ENCODE measurements at regions of chr15 and their contacts with region 1.

Region 1: DNA sequence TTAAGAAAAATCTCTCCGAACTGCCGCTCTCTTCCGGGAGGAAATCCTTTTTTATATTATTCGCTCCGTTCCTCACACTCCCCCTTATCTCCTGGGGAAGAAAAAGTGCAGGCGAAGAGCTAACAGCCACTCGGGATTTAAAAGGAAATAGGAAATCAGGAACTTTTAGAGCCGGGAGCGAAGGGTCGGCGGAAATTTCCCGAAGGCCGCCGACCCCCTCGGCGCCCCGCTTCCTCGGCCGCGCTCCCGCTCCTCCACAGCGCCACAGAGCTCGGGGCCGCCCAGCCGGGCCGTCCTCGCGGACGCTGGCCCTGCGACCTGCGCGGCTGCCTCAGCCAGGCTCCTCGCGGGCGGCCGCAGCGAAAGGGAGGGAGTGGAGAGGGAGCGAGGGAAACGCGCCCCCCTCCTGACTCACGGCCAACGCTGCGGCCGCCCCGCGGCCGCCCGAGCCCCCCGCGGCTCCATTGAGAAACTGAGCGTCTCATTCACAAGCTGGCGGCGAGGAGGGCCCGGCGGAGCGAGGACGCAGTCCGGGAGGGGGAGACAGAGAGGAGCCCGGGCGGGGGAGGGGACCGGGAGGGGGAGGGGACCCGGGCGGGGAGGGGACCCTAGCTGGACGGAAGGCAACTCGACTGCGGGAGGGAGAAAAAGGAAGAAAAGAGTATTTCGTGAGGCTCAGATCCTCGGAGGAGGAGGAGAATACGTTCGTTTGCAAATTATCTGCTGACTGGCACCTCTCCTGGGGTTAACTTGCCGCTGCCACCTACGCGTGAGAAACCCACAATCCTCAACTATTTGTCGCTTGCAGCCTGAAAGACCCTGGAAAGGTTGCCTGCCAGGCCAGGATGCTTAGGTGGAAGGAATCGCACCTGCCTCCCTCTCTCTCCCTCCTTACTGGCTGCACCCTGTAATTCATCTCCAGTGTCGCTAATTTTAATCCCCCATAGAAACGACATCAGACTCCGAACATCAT is at the start of gene PTPN9:
- DNase-seq: peak; percentile 90
- ATAC-seq: peak; percentile 90
- total RNA-seq, gene PTPN9: 9.3 TPM

Region 2: GRCh38 chr15:75517233-75517632 is 62.0 kb before region 1 on chr15:
- intact Hi-C with region 1: loop called (anchors 10 kb)
- DNase-seq: no peak
- ATAC-seq: no peak

Region 3: DNA sequence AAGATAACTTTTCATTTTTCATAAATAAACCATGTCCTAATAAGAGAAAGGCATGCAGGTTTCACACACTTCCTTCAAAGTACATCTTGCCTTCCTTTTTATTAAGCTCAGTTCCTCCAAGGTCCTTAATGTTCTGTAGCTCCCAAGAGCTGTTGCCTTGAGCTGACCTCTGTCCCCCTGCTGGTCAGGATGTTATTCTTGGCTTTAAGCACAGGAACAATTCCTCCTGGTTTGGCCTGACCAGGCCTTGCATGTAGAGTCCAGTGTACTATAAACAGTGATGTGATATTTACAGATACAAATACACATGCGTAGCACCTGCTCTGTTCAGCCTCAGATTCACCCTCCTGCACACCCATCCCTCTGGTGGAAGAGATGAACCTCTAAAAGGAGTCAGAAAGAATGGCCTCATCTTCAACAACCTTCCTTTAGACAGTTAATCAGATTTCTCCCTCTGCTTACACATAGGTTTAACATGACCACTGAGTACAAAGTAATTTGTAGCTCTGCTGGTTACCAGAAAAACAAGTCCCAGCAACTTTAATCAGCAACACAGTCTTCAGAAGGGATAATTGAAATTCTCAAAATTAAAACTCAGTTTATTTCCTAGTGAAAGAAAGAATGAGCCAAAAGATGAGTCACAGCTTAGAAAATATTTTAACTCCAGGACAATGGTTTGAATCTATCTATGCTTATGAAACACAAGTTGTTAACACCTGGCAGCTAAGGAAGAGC is 46.7 kb before region 1 on chr15:
- intact Hi-C with region 1: loop called (anchors 2 kb)
- DNase-seq: no peak
- ATAC-seq: peak; percentile 96

Region 4: DNA sequence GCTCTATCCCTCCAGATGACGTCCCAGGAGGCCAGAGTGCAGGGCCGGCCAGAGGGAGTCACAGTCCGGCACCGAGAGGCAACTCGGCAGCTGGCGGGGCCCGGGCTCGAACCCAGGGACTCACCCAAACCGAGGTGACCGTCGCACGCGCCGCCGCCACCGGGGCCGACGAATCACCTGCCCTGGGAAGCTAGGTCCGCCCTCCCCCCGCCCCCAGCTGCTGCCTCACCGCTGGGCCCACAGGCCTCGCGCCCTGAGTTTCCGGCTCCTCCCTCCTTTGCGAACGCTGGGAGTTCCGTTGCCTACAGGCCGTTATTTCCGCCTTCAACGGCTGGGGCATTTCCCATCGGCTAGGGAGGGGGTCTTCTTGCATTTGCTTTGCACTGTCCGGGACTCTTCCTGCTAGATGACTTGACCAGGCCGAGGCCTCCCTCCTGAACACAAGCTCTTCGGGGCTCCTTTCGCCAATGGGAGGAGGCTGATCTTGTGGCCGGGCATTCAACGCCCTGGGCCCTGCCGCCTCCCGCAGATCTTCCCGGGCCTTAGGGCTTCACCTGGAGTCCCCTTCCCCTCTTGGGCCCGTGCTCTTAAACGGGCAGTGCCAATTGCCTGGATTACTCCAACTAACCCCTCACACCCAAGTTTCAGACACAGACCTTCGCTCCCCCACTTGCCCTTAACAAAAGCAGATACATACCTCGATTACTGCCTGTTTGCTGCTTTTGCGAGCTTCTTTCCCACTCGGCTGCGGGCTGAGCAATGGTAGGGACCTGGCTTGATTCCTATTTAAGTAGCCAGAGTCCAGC is 46.5 kb after region 1 on chr15 and contains the start of gene SNUPN:
- intact Hi-C with region 1: loop called (anchors 5 kb)
- DNase-seq: peak; percentile 97
- ATAC-seq: peak; percentile 94
- total RNA-seq, gene SNUPN: 19.4 TPM